HAP-1 (cell line): ENCODE measurements at regions of chrX and their contacts with region 1.

Region 1: DNA sequence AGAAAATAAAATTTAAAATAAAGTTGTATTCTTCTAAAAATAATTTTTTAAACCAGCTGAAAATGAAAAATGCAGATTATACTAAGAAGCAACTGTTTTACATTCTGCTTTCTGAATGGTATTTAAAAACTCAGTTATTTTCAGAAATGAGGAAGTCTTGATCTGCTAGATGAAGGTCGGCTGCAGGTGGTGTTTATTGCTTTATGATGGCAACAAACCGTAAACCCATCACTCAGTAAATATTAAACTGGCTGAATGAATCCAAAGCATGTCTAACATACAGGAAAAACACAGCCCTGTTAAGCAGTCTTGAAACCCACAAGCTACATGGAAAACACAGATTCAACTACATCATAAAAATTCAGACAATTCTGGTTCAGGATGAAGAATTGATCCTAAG is 29.3 kb downstream of the DYNLT3 start:
- DNase-seq: no peak
- H3K4me3 ChIP-seq: no peak overlapping the region
- H3K4me1 ChIP-seq: peaks cover 12% of the 10 kb centered on the region
- H3K27me3 ChIP-seq: no peaks in the 10 kb centered on the region

Region 2: GRCh38 chrX:37509349-37509748 is 308.7 kb before region 1 on chrX:
- in situ Hi-C with region 1: loop called (anchors 25 kb)
- DNase-seq: peak; percentile 9 to 20
- H3K4me3 ChIP-seq: no peak overlapping the region
- H3K4me1 ChIP-seq: no peaks in the 10 kb centered on the region
- H3K27me3 ChIP-seq: no peaks in the 10 kb centered on the region

Region 3: GRCh38 chrX:37599734-37600133 is 218.3 kb before region 1 on chrX:
- in situ Hi-C with region 1: loop called (anchors 25 kb)
- DNase-seq: no peak
- H3K4me3 ChIP-seq: no peak overlapping the region
- H3K4me1 ChIP-seq: no peaks in the 10 kb centered on the region
- H3K27me3 ChIP-seq: no peaks in the 10 kb centered on the region

Region 4: DNA sequence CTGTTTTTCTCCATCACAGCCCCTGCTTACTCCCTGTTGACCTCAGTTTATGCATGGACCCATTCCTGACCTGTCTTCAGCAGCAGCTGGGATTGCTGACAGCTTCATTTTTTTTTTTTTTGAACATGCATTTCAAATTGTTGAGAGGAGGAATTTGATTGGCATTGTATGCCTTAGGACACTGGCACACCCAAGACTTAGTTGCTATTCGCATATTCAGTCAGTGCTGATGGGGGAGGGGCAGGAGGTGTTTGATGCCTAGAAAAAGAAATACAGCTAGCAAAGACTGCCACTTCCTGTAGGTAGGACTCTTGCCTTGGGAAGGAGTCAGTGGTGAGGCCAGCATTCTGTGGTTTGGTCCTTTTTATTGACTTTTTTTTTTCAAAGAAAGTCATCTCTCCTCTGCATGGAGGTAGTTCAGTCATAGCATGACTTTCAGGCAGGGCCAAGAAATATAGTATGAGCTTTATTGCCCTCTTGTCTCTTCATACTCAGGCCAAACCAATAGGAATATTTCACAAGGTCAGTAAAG is 166.0 kb before region 1 on chrX:
- in situ Hi-C with region 1: no loop called
- DNase-seq: peak in 1 of 2 experiments; percentile 44
- H3K4me3 ChIP-seq: no peak overlapping the region
- H3K4me1 ChIP-seq: 0 out of 2 replicates have a peak, but pooled peaks cover 3% of the 10 kb centered on the region
- H3K27me3 ChIP-seq: no peaks in the 10 kb centered on the region

Region 5: GRCh38 chrX:38275615-38276014 is 457.6 kb after region 1 on chrX:
- in situ Hi-C with region 1: no loop called
- DNase-seq: no peak
- H3K4me3 ChIP-seq: no peak overlapping the region
- H3K4me1 ChIP-seq: peaks cover 5% of the 10 kb centered on the region
- H3K27me3 ChIP-seq: no peaks in the 10 kb centered on the region